Ovary (tissue), 10 donors: ENCODE measurements at regions of chr2 and their contacts with region 1.

Region 1: DNA sequence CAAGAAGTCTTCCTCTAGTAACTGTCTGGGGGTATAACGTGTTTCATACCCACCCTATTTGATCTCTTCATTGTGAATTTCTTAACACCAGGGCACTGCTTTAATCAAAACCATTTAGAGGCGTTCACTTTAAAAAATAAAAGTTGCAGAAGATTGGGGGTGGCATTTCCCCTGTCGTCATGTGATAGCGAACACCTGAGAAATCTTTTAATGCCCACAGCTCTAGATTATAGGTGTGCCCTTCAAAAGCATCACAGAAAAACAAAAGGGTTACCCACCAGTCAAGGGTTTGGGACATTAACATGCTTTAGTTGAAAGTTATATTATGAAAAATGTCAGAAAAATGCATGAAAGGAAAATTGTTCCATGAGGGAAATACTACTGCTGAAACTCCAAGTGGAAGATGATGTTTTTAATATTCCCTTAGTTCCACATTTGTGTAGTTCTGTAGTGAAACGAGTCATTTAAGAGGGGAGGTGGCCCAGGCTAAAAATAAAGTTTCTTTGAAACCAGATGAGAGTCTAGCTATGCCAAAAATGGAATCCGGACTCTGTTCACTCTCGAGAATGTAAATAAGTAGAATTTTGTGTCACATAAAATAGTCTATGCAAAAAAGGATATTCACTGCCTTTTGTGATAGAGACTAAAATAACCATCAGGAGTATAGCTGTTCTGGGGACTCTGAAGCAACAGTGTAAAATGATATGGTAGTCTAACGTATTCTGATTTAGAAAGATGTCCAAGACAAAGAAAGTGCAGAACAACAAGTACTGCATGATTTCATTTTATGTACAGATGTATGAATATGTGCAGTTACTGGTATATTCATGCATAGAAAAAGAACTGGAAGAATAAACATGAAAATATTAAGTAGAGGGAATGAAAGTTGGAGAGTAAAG is 95.3 kb downstream of the TMEM247 start:
- DNase-seq: no peak
- H3K4me3 ChIP-seq: no peak overlapping the region
- H3K27ac ChIP-seq: no peak overlapping the region
- H3K4me1 ChIP-seq: peaks cover 6% of the 10 kb centered on the region
- H3K27me3 ChIP-seq: no peaks in the 10 kb centered on the region
- CTCF ChIP-seq: no peak
- EP300 ChIP-seq: no peak
- POLR2A ChIP-seq: no peak

Region 2: GRCh38 chr2:45458909-45459563 is 1115.7 kb before region 1 on chr2:
- intact Hi-C with region 1: loop called in 1 of 4 experiments (anchors 5 kb)
- DNase-seq: peak in 1 of 5 donors; percentile 20
- H3K4me3 ChIP-seq: no peak overlapping the region
- H3K27ac ChIP-seq: no peak overlapping the region
- H3K4me1 ChIP-seq: no peaks in the 10 kb centered on the region
- H3K27me3 ChIP-seq: no peaks in the 10 kb centered on the region
- CTCF ChIP-seq: no peak
- EP300 ChIP-seq: no peak
- POLR2A ChIP-seq: no peak